ENCODE measurements at regions of chr7 and their contacts with region 1.

Region 1: GRCh38 chr7:37181550-37181932 is 267.1 kb downstream of the ELMO1 start:
- DNase-seq: no peak
- H3K4me3 Mint-ChIP-seq: no peak overlapping the region
- H3K27ac Mint-ChIP-seq: no peak overlapping the region
- H3K4me1 Mint-ChIP-seq: peaks cover 20% of the 10 kb centered on the region
- H3K27me3 Mint-ChIP-seq: no peaks in the 10 kb centered on the region

Region 2: GRCh38 chr7:36440880-36441279 is 740.7 kb before region 1 on chr7:
- intact Hi-C with region 1: loop called (anchors 5 kb)
- DNase-seq: no peak
- H3K4me3 Mint-ChIP-seq: no peak overlapping the region
- H3K27ac Mint-ChIP-seq: no peak overlapping the region
- H3K4me1 Mint-ChIP-seq: no peaks in the 10 kb centered on the region
- H3K27me3 Mint-ChIP-seq: no peaks in the 10 kb centered on the region

Region 3: DNA sequence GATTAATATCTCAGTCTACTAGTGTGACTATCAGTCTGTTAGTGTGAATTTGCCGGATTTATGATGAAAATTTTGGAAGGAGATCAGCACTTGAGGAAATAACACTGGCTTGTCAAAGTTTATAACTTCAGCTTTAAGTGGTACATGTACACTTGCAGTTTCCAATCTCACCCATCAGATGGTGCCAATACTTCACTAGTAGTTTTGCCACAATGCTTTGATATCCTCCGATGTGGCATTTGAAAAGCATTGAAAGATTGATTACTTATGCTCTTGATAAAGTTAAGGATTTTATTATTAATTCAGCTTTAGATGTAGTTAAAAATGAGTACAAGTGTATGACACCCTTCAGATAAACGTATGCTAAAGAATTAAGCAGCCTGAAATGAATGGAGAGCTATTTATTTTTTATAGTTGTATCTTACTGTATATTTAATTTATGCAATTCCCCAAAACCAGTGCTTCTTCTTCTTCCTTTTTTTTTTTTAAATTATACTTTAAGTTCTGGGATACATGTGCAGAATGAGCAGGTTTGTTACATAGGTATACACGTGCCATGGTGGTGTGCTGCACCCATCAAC is 693.7 kb before region 1 on chr7:
- intact Hi-C with region 1: loop called (anchors 1 kb)
- DNase-seq: peak; percentile 26
- H3K4me3 Mint-ChIP-seq: no peak overlapping the region
- H3K27ac Mint-ChIP-seq: no peak overlapping the region
- H3K4me1 Mint-ChIP-seq: peaks cover 5% of the 10 kb centered on the region
- H3K27me3 Mint-ChIP-seq: peaks cover 4% of the 10 kb centered on the region

Region 4: DNA sequence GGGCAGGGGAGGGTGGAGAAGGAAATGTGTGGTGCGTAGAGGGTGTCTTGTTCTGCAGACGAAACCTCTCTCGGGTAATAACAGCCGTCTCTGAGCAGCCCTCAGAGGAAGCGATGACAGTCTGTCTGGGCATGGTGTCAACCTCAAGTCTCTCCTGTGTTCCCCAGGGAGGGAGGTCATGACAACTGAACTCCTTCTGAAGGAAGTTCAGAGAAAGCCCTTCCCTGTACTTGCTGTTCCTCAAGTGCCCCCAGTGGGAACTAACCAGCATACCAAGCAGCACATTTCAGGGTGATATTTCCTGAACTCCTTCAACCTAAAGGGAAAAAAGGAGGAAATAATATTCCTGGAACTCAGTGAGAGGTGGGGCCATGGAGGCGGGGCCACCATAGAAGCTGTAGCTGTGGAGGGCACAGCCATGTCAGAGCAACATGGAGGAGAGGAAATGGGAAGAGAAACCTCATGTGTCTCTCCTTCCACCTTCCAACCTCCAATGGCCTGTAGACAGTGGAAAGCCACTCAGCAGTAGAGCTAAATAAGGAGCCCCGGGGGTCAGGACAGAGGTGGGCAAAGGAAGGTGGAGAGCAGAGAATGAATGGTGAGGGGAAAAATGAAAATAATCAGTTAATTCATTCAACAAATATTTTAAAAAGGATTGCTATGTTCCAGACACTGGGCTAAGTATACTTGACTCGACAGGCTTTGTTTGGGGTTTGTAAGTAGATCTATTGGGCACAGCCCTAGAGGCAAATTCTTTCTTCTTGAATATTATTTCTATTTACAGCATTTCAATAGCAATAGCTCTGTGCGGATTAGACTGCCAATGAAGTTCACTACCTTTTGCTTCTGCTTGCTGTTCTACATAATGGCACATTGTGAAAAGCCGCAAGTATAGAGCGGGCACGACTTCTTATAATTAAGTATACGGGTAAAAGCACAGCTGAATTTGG is 396.3 kb before region 1 on chr7:
- intact Hi-C with region 1: loop called (anchors 5 kb)
- DNase-seq: peak; percentile 68
- H3K4me3 Mint-ChIP-seq: peak overlapping the region; percentile 72
- H3K27ac Mint-ChIP-seq: peak overlapping the region; percentile 92
- H3K4me1 Mint-ChIP-seq: peaks cover 74% of the 10 kb centered on the region
- H3K27me3 Mint-ChIP-seq: no peaks in the 10 kb centered on the region

Region 5: DNA sequence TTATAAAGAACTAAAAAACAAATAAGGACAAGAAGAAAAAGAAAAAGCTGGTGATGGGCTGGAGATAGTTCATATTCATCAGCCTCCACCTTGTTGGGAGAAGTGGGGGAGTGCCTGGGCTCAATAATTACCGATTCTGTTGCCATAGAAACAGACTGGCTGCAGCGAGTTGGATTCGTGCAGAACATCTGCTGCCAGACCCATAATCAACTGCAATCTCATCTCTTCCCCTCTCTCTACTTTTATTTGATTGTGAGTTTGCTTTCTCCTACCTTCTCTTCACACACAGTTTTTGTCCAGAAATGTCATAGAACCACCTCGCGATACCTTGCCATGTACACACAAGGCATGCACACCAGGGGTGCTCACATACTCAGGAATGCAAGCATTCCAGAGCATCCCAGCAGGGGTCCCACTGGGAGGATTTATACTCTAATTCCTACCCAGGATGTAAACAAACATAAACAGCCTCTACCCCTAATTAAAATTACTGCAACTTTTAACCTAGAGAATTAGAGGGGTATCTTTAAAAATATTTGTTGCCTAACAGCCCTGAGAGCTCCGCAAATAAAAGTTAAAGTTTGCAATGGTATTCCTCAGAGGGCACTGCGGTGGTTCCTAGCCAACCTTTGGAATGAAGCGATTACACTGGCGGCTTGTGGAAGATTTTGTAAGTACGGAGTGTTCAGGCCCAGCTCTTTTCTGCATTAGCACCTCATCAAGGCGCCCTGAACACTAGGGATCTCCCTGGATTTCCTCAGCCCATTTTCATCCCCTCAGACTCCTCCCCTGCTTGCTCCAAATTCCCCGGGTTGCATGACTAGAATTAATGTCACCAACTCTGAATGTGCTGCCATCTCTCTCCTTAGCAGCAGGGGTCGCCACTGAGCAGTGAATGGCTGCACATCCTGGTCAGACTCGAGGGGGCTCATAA is 194.8 kb before region 1 on chr7:
- intact Hi-C with region 1: loop called (anchors 1 kb)
- DNase-seq: peak; percentile 40
- H3K4me3 Mint-ChIP-seq: no peak overlapping the region
- H3K27ac Mint-ChIP-seq: no peak overlapping the region
- H3K4me1 Mint-ChIP-seq: peaks cover 36% of the 10 kb centered on the region
- H3K27me3 Mint-ChIP-seq: no peaks in the 10 kb centered on the region

Region 6: DNA sequence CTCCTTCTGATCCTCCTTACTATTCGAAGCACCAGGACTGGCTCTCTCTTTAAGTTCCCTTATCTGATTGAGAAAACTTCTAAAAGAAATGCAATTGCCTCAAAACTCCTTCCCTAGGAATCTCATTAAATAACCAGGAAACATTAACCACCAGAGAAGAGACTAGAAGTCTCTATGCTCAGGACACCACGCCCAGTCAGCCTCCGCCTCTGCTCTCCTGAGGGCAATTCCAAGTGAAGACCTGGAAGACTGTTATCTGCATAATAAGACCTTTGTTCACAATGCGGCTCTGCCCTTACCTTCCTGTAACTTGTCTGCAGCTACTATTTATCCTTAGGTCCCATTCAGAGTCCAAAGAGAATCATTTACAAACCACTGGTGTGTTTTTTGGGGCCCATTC is 188.4 kb after region 1 on chr7:
- intact Hi-C with region 1: no loop called
- DNase-seq: no peak
- H3K4me3 Mint-ChIP-seq: no peak overlapping the region
- H3K27ac Mint-ChIP-seq: no peak overlapping the region
- H3K4me1 Mint-ChIP-seq: peaks cover 30% of the 10 kb centered on the region
- H3K27me3 Mint-ChIP-seq: peaks cover 2% of the 10 kb centered on the region